T-cell (primary cell): ENCODE measurements at regions of chr4 and their contacts with region 1.

Region 1: DNA sequence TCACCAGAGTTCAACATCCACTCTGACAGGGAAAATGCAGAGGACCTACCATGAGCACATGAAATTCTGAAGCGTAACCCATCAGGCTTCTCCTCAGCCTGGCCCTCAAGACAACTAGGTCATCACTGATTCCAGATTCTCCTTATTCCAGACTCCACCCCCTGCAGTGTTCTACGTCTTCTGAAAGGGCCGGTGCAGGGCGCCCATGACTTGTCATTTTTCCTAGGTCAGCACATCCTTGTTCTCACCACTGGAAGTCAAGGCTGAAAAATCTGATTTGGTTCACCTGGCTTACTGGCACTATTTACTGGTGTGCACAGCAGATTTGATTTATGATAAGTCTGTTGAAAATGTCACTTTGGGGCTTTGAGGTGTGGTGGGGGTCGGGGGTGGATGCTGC is 140.9 kb upstream of the KLF3 start:
- DNase-seq: no peak
- ATAC-seq: no peak
- H3K4me3 ChIP-seq: no peak overlapping the region
- H3K4me3 Mint-ChIP-seq: no peak overlapping the region
- H3K27ac ChIP-seq: no peak overlapping the region
- H3K27ac Mint-ChIP-seq: no peak overlapping the region
- H3K4me1 ChIP-seq: peaks cover 6 to 14% of the 10 kb centered on the region in 2 experiments
- H3K4me1 Mint-ChIP-seq: peaks cover 41 to 56% (median 53%) of the 10 kb centered on the region in 3 donors
- H3K27me3 ChIP-seq: no peaks in the 10 kb centered on the region
- H3K27me3 Mint-ChIP-seq: no peaks in the 10 kb centered on the region

Region 2: GRCh38 chr4:38371391-38371851 is 151.6 kb before region 1 on chr4:
- CTCF ChIA-PET with region 1: no interaction called
- POLR2A ChIA-PET with region 1: interaction called in 1 of 2 experiments, 14 read pairs
- DNase-seq: no peak
- ATAC-seq: no peak
- H3K4me3 ChIP-seq: no peak overlapping the region
- H3K4me3 Mint-ChIP-seq: no peak overlapping the region
- H3K27ac ChIP-seq: no peak overlapping the region
- H3K27ac Mint-ChIP-seq: no peak overlapping the region
- H3K4me1 ChIP-seq: peaks cover 3 to 8% of the 10 kb centered on the region in 2 experiments
- H3K4me1 Mint-ChIP-seq: peaks cover 19 to 37% (median 33%) of the 10 kb centered on the region in 3 donors
- H3K27me3 ChIP-seq: peaks cover 0 to 4% of the 10 kb centered on the region in 2 experiments
- H3K27me3 Mint-ChIP-seq: no peaks in the 10 kb centered on the region